CD4-positive, alpha-beta T cell (primary cell): ENCODE measurements at regions of chr13 and their contacts with region 1.

Region 1: DNA sequence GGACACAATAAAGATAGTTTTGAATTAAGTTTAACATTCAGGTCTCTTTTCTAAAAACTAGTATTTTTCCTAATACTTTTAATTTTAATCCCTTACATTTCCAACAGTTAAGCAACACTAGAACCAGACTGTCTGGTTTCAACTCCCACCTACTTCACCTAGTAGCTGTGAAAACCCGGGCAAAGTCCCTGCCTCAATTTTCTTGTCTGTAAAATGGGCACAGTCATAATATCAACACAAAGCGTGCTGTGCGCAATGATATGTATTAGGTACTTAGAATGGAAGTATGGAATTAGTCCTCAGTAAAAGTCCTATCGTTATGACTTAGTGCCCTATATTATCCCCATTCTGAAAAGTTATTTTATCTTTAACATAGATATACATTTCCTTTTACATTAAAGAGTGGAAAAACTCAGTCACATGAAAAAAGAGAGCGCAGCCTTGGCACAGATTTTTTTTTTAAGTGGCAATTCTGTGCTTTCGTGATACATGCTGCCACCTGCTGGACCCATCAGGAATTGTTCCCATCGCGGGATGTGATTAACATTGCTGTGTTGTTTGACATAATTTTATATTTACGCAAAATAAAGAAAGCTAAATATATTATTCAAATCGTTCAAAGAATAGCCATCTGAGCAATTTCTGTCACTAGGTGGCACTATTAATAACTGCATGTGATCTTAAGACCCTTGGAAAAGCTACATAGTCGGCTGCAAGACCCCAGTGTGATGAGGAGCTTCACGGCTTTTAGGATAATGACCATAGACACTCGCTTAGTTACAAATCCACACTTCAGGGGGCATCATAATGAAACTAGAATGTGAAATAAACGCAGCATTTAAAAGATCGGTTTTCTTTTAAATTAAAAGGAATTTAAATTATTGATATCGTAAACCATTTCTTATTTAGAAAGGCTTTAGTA is 59.9 kb downstream of the LIG4 start:
- DNase-seq: peak; percentile 16 to 68 (median 44)
- ATAC-seq: peak; percentile 48
- H3K4me3 ChIP-seq: no peak overlapping the region
- H3K4me3 Mint-ChIP-seq: no peak overlapping the region
- H3K27ac ChIP-seq: no peak overlapping the region
- H3K27ac Mint-ChIP-seq: no peak overlapping the region
- H3K4me1 ChIP-seq: no peaks in the 10 kb centered on the region
- H3K4me1 Mint-ChIP-seq: no peaks in the 10 kb centered on the region
- H3K27me3 ChIP-seq: peaks cover 0 to 2% of the 10 kb centered on the region in 2 experiments
- H3K27me3 Mint-ChIP-seq: peaks cover 32% of the 10 kb centered on the region
- CTCF ChIP-seq: peak; percentile 98

Region 2: GRCh38 chr13:107205303-107206104 is 949.9 kb before region 1 on chr13:
- CTCF ChIA-PET with region 1: interaction called, 3 read pairs
- POLR2A ChIA-PET with region 1: no interaction called
- intact Hi-C with region 1: loop called in 1 of 2 experiments (anchors 1 kb)
- DNase-seq: peak; percentile 14 to 66 (median 38)
- ATAC-seq: peak; percentile 49
- H3K4me3 ChIP-seq: no peak overlapping the region
- H3K4me3 Mint-ChIP-seq: no peak overlapping the region
- H3K27ac ChIP-seq: no peak overlapping the region
- H3K27ac Mint-ChIP-seq: no peak overlapping the region
- H3K4me1 ChIP-seq: no peaks in the 10 kb centered on the region
- H3K4me1 Mint-ChIP-seq: no peaks in the 10 kb centered on the region
- H3K27me3 ChIP-seq: no peaks in the 10 kb centered on the region
- H3K27me3 Mint-ChIP-seq: peaks cover 5% of the 10 kb centered on the region
- CTCF ChIP-seq: peak; percentile 95

Region 3: DNA sequence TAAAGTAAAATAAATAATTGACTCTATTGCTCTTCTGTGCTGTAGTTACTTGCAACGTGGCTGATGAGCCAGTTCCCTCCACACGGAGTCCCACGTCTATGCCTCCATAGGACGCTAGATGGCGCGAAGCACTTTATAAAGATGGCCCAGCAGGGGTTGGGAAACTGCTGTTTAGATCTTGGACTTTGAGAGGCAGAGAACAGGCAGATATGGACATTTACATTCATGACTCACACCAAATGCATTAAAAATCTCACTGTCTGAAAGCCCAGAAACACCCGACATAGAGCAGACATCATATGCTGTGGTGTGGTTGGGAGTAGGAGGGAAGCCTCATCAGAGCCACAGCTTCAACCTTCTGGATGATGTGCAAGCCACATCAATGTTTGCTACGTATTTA is 944.4 kb before region 1 on chr13:
- CTCF ChIA-PET with region 1: no interaction called
- POLR2A ChIA-PET with region 1: no interaction called
- intact Hi-C with region 1: loop called in 1 of 2 experiments (anchors 2 kb)
- DNase-seq: peak in 9 of 14 experiments; percentile 9 to 48 (median 14)
- ATAC-seq: peak; percentile 41
- H3K4me3 ChIP-seq: no peak overlapping the region
- H3K4me3 Mint-ChIP-seq: no peak overlapping the region
- H3K27ac ChIP-seq: no peak overlapping the region
- H3K27ac Mint-ChIP-seq: no peak overlapping the region
- H3K4me1 ChIP-seq: no peaks in the 10 kb centered on the region
- H3K4me1 Mint-ChIP-seq: no peaks in the 10 kb centered on the region
- H3K27me3 ChIP-seq: no peaks in the 10 kb centered on the region
- H3K27me3 Mint-ChIP-seq: peaks cover 5% of the 10 kb centered on the region
- CTCF ChIP-seq: peak; percentile 64

Region 4: DNA sequence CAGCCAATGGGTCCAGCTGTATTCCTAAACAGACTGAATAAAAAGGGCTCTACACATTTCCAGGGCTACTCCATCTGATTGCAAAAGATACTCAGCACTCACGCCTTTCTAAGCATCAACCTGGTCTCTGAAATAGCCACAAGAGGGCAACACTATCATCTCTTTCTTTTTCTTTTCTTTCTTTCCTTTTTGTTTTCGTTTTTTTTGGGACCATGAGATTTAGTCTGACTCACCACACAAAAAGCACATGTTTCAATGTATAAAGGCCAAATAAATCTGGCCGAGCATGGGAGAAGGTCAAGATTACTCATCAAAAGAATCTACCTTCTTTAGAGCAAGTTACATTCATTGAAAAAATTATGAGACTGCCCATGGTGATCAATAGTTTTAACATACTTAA is 781.9 kb before region 1 on chr13:
- CTCF ChIA-PET with region 1: no interaction called
- POLR2A ChIA-PET with region 1: no interaction called
- intact Hi-C with region 1: loop called in 1 of 2 experiments (anchors 10 kb)
- DNase-seq: no peak
- ATAC-seq: no peak
- H3K4me3 ChIP-seq: no peak overlapping the region
- H3K4me3 Mint-ChIP-seq: no peak overlapping the region
- H3K27ac ChIP-seq: no peak overlapping the region
- H3K27ac Mint-ChIP-seq: no peak overlapping the region
- H3K4me1 ChIP-seq: no peaks in the 10 kb centered on the region
- H3K4me1 Mint-ChIP-seq: no peaks in the 10 kb centered on the region
- H3K27me3 ChIP-seq: no peaks in the 10 kb centered on the region
- H3K27me3 Mint-ChIP-seq: no peaks in the 10 kb centered on the region
- CTCF ChIP-seq: no peak